GM18951 (cell line): ENCODE measurements at regions of chr1 and their contacts with region 1.

Region 1: DNA sequence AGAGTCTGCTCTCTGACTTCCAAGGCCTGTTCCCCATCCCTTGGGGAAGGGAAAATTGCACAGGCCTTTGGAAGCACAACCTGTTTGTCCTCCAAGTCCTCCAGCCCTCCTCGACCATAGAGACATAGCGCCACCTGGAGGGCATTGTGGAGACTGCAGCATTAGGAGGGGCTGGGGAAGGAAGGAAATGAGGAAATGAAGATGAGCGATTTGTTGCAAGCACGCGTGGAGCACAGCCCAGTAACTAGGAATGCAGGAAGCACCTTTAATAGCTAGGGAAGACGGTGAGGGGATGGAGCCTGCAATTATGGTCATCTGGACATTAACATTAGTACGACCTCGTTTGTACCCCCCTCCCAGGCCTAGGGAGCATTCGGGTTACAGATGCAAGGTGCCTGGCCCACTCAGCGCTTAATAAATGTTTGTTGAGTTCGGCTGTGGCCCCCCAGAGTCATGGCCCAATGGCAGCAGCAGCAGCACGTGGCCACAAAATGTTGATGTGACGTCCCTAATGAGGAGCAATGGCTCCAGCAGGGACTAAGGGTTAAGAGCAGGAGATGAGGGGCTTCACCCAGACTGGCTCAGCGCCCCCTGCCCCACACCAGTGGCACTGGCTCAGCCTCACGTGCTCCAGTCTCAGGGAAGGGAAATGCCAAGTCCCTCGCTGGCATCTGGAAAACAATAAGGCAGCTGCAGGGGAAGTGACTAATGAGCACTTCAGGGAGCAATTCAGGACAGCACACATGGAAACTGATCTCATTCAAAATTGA is 8.0 kb upstream of the CAMK2N1 start:
- POLR2A ChIP-seq: no peak

Region 2: GRCh38 chr1:20212685-20213331 is 281.2 kb before region 1 on chr1:
- in situ Hi-C with region 1: loop called (anchors 10 kb)
- POLR2A ChIP-seq: no peak